Cardiac septum (tissue), 1 donor: ENCODE measurements at regions of chr22 and their contacts with region 1.

Region 1: GRCh38 chr22:35684270-35684700 is 33.4 kb upstream of the APOL5 start:
- DNase-seq: no peak

Region 2: GRCh38 chr22:35638410-35638809 is 45.9 kb before region 1 on chr22:
- intact Hi-C with region 1: loop called (anchors 5 kb)
- DNase-seq: peak; percentile 91

Region 3: DNA sequence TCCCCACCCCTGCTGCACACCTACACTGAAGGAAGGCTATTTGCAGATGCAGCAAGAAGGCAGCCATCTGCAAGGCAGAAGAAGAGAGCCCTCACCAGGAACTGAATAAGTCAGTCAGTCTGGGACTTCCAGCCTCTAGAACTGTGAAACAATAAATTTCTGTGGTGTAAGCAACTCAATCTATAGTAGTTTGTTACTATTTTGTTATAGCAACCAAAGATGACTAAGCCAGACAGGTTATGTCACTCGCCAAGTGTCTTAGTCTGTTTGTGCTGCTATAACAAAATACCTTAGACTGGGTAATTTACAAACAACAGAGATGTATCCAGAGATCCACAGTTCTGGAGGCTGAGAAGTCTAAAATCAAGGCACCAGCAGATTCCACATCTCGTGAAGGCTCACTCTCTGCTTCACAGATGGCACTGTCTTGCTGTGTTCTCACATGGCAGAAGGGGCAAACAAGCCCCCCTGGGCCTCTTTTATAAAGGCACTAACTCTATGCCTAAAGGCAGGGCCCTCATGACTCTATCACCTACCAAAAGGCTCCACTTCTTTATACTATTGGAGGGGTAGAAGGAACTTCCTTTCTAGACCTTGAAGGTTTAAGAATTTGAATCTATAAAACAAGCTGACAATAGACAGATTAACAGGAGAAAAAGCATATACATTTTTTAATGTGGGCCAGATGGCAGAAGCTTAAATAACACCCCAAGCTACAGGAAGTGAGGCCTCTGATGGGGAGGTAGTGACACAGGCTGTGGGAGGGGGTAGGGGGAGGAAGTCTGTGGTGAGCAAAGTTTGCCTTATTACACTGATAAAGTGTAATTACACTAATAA is 23.8 kb before region 1 on chr22:
- intact Hi-C with region 1: no loop called
- DNase-seq: no peak